ENCODE measurements at regions of chr2 and their contacts with region 1.

Region 1: DNA sequence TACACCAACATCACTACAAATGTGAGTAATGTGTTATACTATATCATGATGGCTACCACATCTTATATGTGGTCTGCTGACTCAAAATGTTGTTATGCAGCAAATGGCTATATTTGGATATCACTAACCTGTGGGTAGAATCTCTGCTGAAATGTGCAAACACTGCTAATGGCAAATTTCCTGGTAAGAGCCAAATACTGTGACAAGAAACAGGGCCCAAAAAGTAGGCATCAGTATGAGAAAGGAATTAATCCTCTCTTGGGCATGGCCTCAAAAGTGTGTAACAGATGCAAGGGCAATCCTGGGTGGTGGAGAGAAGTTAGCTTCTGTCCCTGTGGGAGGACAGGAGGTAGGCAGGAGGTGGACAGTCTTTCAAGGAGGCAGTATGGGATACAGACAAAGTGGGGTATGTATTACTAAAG is 13.3 kb downstream of the ATF2 start:
- DNase-seq: peak; percentile 8
- H3K4me3 Mint-ChIP-seq: no peak overlapping the region
- H3K27ac Mint-ChIP-seq: no peak overlapping the region
- H3K4me1 Mint-ChIP-seq: peaks cover 40% of the 10 kb centered on the region
- H3K27me3 Mint-ChIP-seq: no peaks in the 10 kb centered on the region

Region 2: GRCh38 chr2:175136334-175137215 is 18.1 kb before region 1 on chr2:
- CTCF ChIA-PET with region 1: interaction called, 4 read pairs
- intact Hi-C with region 1: loop called (anchors 2 kb)
- DNase-seq: no peak
- H3K4me3 Mint-ChIP-seq: no peak overlapping the region
- H3K27ac Mint-ChIP-seq: no peak overlapping the region
- H3K4me1 Mint-ChIP-seq: peaks cover 28% of the 10 kb centered on the region
- H3K27me3 Mint-ChIP-seq: no peaks in the 10 kb centered on the region

Region 3: GRCh38 chr2:175233135-175233719 is 78.6 kb after region 1 on chr2:
- CTCF ChIA-PET with region 1: no interaction called
- intact Hi-C with region 1: no loop called
- DNase-seq: no peak
- H3K4me3 Mint-ChIP-seq: no peak overlapping the region
- H3K27ac Mint-ChIP-seq: no peak overlapping the region
- H3K4me1 Mint-ChIP-seq: no peaks in the 10 kb centered on the region
- H3K27me3 Mint-ChIP-seq: peaks cover 12% of the 10 kb centered on the region